ENCODE measurements at regions of chr11 and their contacts with region 1.

Region 1: DNA sequence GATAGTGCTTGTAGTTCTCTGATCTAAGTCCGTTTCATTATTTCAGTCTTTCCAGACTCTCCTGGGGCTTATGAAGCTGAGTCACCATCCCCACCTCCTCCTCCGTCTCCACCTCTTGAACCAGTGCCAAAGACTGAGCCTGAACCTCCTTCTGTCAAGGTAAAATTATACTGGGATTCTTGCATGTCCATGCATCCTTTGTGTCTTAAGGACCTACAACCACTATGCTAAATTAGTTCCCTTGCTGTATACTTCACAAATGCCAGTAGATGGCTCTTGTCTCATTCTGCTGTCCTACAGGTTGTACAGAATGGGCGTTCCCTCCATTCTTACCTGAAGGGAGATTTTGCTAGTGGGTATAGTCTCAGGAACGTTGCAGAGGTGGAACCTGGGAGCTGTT is 42.2 kb downstream of the POLD3 start:
- DNase-seq: peak; percentile 94
- H3K4me3 Mint-ChIP-seq: no peak overlapping the region
- H3K27ac Mint-ChIP-seq: no peak overlapping the region
- H3K4me1 Mint-ChIP-seq: peaks cover 40% of the 10 kb centered on the region
- H3K27me3 Mint-ChIP-seq: no peaks in the 10 kb centered on the region
- CTCF ChIP-seq: peak; percentile 33

Region 2: DNA sequence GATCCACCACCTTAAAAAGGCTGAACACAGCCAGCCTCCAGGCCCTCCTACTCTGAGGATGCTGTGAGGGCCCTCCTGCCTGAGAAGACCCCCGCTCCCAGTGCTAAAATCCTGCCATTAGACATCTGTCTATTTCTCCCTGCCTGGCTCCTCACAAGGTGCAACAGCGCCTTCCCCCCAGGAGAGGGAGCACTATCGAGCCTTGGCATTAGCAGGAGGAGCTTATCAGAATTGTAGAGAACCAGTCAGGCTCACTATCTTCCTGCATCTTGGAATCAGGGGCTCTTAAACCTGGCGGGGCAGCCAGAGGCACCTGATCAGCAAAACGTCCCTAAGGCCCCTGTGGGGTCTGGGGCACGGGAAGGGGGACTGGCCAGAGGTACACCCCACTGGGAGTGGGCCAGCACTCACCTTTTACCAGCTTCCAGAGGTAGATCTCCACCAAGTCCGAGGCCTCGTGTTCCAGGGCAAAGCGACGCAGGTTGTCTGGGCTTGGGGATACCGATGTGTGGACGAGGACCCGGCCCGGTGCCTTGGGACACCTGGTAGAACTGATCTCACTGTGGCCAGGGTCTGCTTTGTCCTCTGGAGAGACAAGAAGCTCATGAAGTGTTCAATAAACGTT is 68.0 kb after region 1 on chr11:
- CTCF ChIA-PET with region 1: interaction called, 20 read pairs
- POLR2A ChIA-PET with region 1: interaction called, 4 read pairs
- intact Hi-C with region 1: no loop called
- DNase-seq: peak; percentile 78
- H3K4me3 Mint-ChIP-seq: no peak overlapping the region
- H3K27ac Mint-ChIP-seq: no peak overlapping the region
- H3K4me1 Mint-ChIP-seq: peaks cover 3% of the 10 kb centered on the region
- H3K27me3 Mint-ChIP-seq: no peaks in the 10 kb centered on the region
- CTCF ChIP-seq: peak; percentile 86

Region 3: DNA sequence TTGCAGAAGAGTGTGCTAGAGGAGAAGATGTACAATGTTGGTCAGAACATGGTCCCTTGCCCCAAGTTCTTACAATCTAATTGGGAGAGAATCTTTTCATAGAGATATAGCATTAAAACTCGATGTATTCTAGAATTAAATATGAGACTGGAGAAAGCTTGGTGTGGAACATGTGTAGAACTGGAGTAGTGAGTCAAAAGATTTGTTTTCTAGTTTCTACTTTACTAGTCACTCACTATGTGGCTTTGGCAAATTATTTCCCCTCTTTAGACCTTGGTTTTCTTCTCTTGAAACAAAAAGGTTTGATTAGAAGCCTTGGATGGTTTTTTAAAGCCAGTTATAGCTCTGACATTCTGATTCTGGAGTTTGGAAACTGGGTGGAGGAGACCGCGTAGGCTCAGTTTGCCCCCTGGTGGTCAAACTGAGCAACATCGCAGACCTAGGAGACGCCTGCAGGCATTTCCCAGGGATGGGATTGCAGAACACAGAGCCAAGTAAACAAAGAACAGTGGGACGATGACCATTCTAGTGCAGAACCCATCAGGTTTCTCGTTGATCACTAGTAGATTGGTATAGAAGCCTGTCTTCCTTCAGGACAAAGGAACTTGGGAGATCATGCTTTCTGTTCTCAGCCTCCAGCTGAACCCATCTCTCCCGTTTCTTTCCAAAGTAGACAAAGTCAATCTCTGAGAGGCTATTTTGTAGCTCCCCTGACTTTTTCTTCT is 105.2 kb after region 1 on chr11:
- CTCF ChIA-PET with region 1: interaction called, 21 read pairs
- POLR2A ChIA-PET with region 1: interaction called, 3 read pairs
- intact Hi-C with region 1: no loop called
- DNase-seq: peak; percentile 79
- H3K4me3 Mint-ChIP-seq: no peak overlapping the region
- H3K27ac Mint-ChIP-seq: no peak overlapping the region
- H3K4me1 Mint-ChIP-seq: no peaks in the 10 kb centered on the region
- H3K27me3 Mint-ChIP-seq: no peaks in the 10 kb centered on the region
- CTCF ChIP-seq: peak; percentile 81

Region 4: GRCh38 chr11:74748211-74749127 is 113.9 kb after region 1 on chr11 and contains the start of gene RNF169:
- CTCF ChIA-PET with region 1: interaction called, 3 read pairs
- POLR2A ChIA-PET with region 1: interaction called, 13 read pairs
- intact Hi-C with region 1: no loop called
- DNase-seq: peak; percentile 96
- H3K4me3 Mint-ChIP-seq: peak within 1 kb of the TSS; percentile 91
- H3K27ac Mint-ChIP-seq: peak within 1 kb of the TSS; percentile 85
- H3K4me1 Mint-ChIP-seq: peaks cover 23% of the 10 kb centered on the region
- H3K27me3 Mint-ChIP-seq: no peaks in the 10 kb centered on the region
- CTCF ChIP-seq: no peak
- total RNA-seq, gene RNF169: 15.0 and 18.0 TPM in 2 replicates

Region 5: GRCh38 chr11:74820763-74821162 is 186.2 kb after region 1 on chr11:
- CTCF ChIA-PET with region 1: no interaction called
- POLR2A ChIA-PET with region 1: no interaction called
- intact Hi-C with region 1: loop called (anchors 10 kb)
- DNase-seq: peak; percentile 55
- H3K4me3 Mint-ChIP-seq: no peak overlapping the region
- H3K27ac Mint-ChIP-seq: no peak overlapping the region
- H3K4me1 Mint-ChIP-seq: peaks cover 17% of the 10 kb centered on the region
- H3K27me3 Mint-ChIP-seq: no peaks in the 10 kb centered on the region
- CTCF ChIP-seq: no peak

Measured in MCF 10A (cell line).